ENCODE measurements at regions of chr17 and their contacts with region 1.

Region 1: GRCh38 chr17:48908047-48908843 is at the start of gene UBE2Z:
- DNase-seq: peak; percentile 87 to 99 (median 94)

Region 2: GRCh38 chr17:48878918-48879898 is 29.0 kb before region 1 on chr17:
- intact Hi-C with region 1: no loop called
- DNase-seq: peak in 4 of 10 donors; percentile 36 to 51 (median 44)

Region 3: DNA sequence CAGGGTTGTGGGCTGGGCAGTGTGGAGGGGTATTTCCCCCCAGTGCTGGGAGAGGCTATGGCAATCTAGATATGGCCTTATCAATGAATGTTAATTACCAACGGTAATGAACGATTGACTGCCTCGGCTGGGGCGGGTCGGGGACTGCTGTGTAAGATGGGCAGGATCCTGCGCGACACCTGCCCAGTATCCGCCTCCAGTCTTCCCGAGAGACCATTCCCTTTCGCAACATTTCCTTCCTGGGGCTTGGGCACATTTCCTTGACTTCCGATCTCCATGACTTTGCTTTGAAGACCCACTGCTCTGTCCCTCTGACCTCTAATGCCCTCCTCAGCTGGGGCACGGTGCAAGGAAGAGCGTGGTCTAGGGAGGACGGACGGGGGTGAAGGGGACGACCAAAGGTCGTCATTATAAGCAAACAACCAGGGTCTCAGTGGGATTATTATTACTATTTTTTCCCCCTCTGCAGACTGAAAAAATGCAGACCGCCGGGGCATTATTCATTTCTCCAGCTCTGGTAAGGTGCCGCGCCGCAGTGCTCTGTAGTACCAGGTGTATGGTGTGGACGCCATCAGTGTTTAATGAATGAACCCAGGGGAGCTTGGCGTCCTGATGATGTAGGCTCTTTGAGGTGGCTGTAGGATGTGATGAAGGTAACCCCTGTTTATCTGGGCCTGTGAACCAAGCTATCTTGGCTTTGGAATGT is 15.2 kb before region 1 on chr17:
- intact Hi-C with region 1: loop called (anchors 1 kb)
- DNase-seq: no peak

Region 4: DNA sequence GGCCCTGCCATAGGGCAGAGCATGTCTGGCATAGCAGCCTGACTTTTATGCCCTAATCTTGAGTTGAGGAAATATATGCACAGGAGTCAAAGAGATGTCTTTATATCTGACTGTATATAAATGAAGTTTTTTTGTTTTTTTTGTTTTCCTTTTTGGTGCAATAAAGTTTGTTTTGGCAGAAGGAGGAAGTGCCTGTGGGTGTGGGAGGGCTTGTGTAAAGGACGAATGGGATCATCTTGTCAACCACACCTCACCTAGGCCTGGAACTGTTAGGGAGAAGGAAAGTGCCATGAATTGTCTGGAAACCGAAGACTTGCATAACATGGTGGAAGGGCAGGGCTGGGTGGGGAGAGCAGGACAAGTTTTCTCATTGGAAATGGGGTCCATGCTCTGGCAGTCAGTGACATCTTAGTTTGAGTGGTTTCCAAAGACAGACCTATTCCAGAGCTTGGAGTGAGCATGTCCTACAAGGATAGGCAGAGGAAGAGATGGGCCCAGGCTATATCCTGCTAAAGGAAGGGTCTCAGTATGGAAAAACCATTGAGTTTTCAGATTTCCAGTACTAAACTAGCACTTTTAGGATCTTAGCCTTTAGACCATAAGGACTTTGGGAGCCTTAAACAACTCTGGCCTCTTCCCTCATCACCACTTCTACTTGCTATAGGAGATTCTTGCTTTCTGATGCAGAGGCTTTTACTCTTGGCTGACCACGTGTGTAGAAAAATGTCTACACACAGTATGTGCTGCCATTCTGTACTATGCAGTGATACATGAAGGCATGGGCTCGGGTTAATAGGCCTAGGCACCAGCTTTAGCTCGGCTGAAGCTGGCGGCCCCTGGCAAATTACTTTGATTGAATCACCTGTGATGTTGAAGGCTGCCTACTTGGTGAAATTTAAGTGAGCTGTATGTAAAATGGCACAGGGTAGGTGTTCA is 20.9 kb after region 1 on chr17:
- intact Hi-C with region 1: no loop called
- DNase-seq: no peak